ENCODE measurements at regions of chr20 and their contacts with region 1.

Region 1: DNA sequence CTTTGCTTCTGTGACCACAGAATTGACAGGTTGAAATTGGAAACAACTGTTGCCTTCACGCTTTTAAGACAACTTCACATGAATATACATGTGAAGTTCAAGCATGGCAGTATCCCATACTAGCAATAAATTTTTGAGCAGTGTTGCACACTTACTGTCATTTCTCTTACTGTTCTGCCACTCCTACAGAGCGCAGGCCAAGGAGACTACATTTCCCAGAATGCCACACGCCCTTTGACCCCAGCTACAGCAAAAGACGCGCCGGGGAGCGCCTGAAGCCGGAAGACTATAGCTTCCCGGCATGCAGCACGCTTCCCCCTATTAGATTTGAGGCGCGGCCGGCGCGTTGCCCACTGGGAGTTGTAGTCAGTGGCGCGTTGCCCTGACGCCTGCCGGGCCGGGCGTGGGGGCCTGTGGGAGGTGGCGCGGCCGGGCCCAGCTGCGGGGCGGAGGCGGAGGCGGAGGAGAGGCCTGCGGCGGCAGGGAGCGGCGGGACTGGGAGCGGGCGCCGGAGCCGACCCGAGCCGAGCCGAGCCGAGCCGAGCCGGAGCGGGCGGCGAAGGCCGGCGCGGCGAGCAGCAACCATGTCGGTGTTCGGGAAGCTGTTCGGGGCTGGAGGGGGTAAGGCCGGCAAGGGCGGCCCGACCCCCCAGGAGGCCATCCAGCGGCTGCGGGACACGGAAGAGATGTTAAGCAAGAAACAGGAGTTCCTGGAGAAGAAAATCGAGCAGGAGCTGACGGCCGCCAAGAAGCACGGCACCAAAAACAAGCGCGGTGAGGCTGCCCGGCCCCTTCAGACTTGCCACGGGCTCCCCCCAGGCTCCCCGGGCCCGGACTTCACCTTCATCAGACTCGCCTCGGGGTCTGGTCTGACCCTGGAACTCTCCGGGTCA is at the start of gene CHMP4B:
- DNase-seq: peak; percentile 97
- ATAC-seq: peak; percentile 95
- H3K4me3 Mint-ChIP-seq: peak within 1 kb of the TSS; percentile 98
- H3K27ac Mint-ChIP-seq: peak within 1 kb of the TSS; percentile 92
- H3K4me1 Mint-ChIP-seq: peaks cover 45% of the 10 kb centered on the region
- H3K27me3 Mint-ChIP-seq: no peaks in the 10 kb centered on the region
- CTCF ChIP-seq: no peak
- total RNA-seq, gene CHMP4B: 116 and 121 TPM in 2 replicates

Region 2: DNA sequence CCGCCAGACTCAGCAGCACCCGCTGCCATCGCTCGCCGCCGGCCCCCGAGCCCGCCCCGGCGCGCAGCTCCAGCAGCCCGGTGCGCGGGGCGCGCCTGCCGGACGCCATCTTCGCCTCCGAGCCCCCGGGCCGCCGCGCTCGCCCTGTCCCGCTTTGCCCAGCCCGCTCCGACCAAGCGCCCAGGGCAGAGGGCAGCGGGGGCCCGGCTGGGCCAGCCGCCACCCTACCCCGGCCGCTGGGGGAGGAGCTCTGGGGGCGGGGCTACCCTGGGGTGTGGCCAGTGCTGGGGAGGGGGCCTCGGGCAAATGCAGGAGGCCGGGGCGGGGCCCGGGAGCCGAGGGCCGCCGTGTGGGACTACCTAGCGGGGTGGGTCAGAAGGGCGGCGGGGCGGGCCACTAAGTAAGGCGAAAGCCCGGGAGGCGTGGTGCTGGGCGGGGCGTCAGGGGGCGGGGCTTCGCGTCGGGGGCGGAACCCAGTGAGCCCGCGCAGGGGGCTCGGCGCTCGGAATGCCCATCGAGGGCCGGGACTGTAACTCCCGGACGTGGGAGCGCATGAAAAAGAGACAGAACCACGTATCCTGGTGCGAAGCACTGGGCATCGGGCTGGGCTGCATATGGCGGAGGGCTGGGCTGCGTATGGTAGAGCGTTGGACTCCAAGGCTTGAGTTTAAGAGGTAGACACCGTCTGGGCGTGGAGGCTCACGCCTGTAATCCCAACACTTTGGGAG is 367.5 kb before region 1 on chr20 and contains the start of gene SNTA1:
- CTCF ChIA-PET with region 1: no interaction called
- POLR2A ChIA-PET with region 1: no interaction called
- intact Hi-C with region 1: loop called (anchors 2 kb)
- DNase-seq: peak; percentile 86
- ATAC-seq: peak; percentile 89
- H3K4me3 Mint-ChIP-seq: peak within 1 kb of the TSS; percentile 89
- H3K27ac Mint-ChIP-seq: peak within 1 kb of the TSS; percentile 83
- H3K4me1 Mint-ChIP-seq: peaks cover 29% of the 10 kb centered on the region
- H3K27me3 Mint-ChIP-seq: no peaks in the 10 kb centered on the region
- CTCF ChIP-seq: no peak
- total RNA-seq, gene SNTA1: 1.7 and 2.0 TPM in 2 replicates

Region 3: DNA sequence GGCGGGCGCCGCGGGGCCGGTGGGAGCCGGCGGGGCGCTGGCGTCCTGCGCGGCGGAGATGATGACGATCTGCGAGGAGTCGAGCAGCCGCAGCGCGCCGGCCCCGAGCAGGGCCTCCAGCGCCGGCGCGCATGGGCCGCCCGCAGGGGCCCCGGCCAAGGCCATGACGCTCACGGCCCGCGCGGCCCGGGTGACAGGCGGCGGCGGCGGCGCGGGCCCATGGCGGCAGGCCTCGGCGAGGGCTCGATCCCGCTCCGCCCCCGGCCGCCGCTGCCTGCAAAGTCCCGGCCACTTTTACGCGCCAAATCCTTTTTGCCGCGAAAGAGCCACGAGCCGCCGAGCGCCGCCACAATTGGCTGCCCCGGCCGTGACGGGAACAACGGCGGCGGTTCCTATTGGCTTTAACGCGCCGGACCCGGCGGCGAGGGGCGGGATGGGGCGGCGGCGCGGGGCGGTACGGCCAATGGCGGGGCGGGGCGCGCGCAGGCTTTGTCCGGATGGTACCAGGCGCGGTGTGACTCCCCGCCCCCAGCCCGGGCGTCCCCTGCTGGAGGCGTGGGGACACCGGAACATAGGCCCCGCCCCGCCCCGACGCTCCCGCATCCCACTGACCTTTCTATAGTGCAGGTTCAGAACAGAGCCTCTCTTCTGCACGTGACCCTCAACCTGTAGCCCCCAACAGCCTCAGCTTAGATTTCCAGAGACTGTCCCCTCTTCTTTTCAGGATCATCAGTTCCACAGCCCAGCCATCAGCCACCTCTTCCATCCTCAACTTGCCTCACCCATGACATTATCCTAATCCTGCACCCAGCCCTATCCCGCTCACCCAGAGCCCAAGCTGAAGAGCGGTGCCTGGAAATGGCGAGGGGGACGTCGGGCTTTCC is 124.8 kb before region 1 on chr20 and contains the start of gene E2F1:
- CTCF ChIA-PET with region 1: no interaction called
- POLR2A ChIA-PET with region 1: interaction called, 4 read pairs
- intact Hi-C with region 1: loop called (anchors 5 kb)
- DNase-seq: peak; percentile 95
- ATAC-seq: peak; percentile 93
- H3K4me3 Mint-ChIP-seq: peak within 1 kb of the TSS; percentile 86
- H3K27ac Mint-ChIP-seq: peak within 1 kb of the TSS; percentile 77
- H3K4me1 Mint-ChIP-seq: peaks cover 30% of the 10 kb centered on the region
- H3K27me3 Mint-ChIP-seq: no peaks in the 10 kb centered on the region
- CTCF ChIP-seq: no peak
- total RNA-seq, gene E2F1: 6.7 and 8.9 TPM in 2 replicates

Region 4: GRCh38 chr20:33773412-33774089 is 37.6 kb before region 1 on chr20:
- CTCF ChIA-PET with region 1: interaction called, 3 read pairs
- POLR2A ChIA-PET with region 1: interaction called, 40 read pairs
- intact Hi-C with region 1: loop called (anchors 1 kb)
- DNase-seq: no peak
- ATAC-seq: peak; percentile 65
- H3K4me3 Mint-ChIP-seq: peak overlapping the region; percentile 41
- H3K27ac Mint-ChIP-seq: peak overlapping the region; percentile 93
- H3K4me1 Mint-ChIP-seq: peaks cover 64% of the 10 kb centered on the region
- H3K27me3 Mint-ChIP-seq: no peaks in the 10 kb centered on the region
- CTCF ChIP-seq: no peak

Region 5: DNA sequence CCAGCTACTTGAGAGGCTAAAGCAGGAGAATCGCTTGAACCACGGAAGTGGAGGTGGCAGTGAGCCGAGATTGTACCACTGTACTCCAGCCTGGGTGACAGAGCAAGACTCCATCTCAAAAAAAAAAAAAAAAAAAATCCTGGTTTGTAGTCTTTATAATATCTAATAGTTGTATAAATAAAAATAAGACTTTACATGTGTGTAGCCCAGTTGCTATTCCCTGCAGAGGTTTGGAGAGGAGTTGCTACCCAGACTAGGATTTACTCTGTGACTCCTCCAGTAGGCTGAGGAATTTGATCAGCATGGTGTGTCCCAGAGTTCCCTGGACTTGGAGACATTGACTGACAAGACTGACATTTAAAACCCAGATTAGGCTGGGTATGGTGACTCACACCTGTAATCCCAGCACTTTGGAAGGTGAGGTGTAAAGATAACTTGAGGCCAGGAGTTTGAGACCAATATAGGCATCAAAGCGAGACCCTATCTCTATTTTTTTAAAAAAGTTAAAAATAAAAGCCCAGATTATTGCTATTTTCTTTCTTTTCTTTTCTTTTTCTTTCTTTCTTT is 10.2 kb after region 1 on chr20:
- CTCF ChIA-PET with region 1: interaction called, 3 read pairs
- POLR2A ChIA-PET with region 1: interaction called, 10 read pairs
- intact Hi-C with region 1: no loop called
- DNase-seq: no peak
- ATAC-seq: no peak
- H3K4me3 Mint-ChIP-seq: no peak overlapping the region
- H3K27ac Mint-ChIP-seq: no peak overlapping the region
- H3K4me1 Mint-ChIP-seq: peaks cover 82% of the 10 kb centered on the region
- H3K27me3 Mint-ChIP-seq: no peaks in the 10 kb centered on the region
- CTCF ChIP-seq: no peak

Region 6: GRCh38 chr20:33981964-33982363 is 170.8 kb after region 1 on chr20:
- CTCF ChIA-PET with region 1: no interaction called
- POLR2A ChIA-PET with region 1: no interaction called
- intact Hi-C with region 1: no loop called
- DNase-seq: no peak
- ATAC-seq: no peak
- H3K4me3 Mint-ChIP-seq: no peak overlapping the region
- H3K27ac Mint-ChIP-seq: no peak overlapping the region
- H3K4me1 Mint-ChIP-seq: no peaks in the 10 kb centered on the region
- H3K27me3 Mint-ChIP-seq: peaks cover 19% of the 10 kb centered on the region
- CTCF ChIP-seq: no peak

Region 7: DNA sequence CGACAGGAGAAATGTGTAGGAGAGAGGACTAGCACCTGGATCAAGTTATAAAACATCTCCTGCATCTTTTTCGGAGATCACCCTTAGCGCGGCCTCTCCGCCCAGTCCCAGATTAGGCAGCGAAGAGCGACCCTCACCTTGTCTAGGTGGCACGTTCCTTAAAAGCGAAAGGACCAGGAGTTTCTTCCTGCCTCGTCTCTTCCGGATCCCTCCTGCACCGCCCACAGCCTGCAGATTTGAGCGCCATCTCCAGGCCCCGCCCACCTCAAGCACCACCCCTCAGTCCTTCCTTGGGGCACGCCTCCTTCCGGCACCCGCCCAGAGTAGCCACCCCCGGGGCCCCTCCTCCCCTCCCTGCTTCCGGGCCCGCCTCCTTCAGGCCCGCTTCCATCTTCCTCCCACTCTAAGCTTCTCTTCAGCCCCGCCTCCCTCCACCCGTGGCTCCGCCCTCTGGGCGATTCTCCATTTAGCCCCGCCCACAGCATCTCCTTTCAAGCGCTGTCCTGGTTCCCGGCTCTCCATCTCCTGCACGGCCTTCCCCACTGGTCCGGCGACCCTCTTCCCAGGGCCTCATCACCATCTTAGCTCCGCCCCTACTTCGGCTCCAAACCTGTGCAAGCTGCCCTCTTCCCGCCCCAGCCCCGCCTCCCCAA is 181.9 kb after region 1 on chr20:
- CTCF ChIA-PET with region 1: no interaction called
- POLR2A ChIA-PET with region 1: interaction called, 13 read pairs
- intact Hi-C with region 1: loop called (anchors 1 kb)
- DNase-seq: peak; percentile 98
- ATAC-seq: peak; percentile 84
- H3K4me3 Mint-ChIP-seq: peak overlapping the region; percentile 95
- H3K27ac Mint-ChIP-seq: peak overlapping the region; percentile 98
- H3K4me1 Mint-ChIP-seq: peaks cover 60% of the 10 kb centered on the region
- H3K27me3 Mint-ChIP-seq: no peaks in the 10 kb centered on the region
- CTCF ChIP-seq: no peak

Region 8: GRCh38 chr20:35146920-35147574 is 1335.9 kb after region 1 on chr20 and contains the start of gene EDEM2:
- CTCF ChIA-PET with region 1: no interaction called
- POLR2A ChIA-PET with region 1: no interaction called
- intact Hi-C with region 1: loop called (anchors 5 kb)
- DNase-seq: peak; percentile 89
- ATAC-seq: peak; percentile 74
- H3K4me3 Mint-ChIP-seq: peak within 1 kb of the TSS; percentile 94
- H3K27ac Mint-ChIP-seq: peak within 1 kb of the TSS; percentile 91
- H3K4me1 Mint-ChIP-seq: peaks cover 48% of the 10 kb centered on the region
- H3K27me3 Mint-ChIP-seq: no peaks in the 10 kb centered on the region
- CTCF ChIP-seq: no peak
- total RNA-seq, gene EDEM2: 23.0 and 24.4 TPM in 2 replicates